T-cell (primary cell): ENCODE measurements at regions of chr14 and their contacts with region 1.

Region 1: DNA sequence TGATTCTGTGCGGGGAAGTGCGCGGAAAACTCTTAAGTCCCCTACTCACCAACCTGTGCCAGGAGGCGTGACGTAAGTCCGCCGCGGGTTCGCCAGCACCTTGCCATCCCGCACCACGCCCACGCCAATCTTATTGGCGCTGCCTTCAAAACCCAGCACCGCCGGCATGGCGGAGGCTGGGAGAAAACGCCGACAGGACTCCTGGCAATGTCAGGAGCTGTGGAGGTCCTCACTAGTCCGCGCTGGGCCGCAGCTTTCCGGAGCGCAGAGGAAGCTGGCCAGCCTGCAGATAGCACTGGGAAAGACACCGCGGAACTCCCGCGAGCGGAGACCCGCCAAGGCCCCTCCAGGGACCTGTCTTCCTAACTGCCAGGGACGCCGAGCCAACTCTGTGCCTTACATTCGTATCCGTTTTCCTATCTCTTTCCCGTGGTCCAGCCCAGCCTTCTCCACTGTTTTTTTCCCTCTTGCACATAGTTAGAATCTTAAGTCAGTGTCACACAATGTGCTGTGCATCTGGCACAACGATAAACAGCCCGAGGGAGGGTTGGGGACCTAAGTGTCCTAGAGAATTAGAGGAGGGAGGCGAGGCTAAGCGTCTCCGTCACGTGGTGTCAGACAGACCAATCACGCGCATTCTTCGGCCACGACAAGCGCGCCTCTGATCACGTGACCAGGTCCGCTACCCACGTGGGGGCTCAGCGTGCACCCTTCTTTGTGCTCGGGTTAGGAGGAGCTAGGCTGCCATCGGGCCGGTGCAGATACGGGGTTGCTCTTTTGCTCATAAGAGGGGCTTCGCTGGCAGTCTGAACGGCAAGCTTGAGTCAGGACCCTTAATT is at the starts of genes APEX1 and OSGEP:
- DNase-seq: peak; percentile 92 to 100 (median 98)
- ATAC-seq: peak; percentile 81 to 89 (median 86)
- H3K4me3 ChIP-seq: peak within 1 kb of the TSS; percentile 87 to 88
- H3K4me3 Mint-ChIP-seq: peak within 1 kb of the TSS in 1 of 3 donors; percentile 47
- H3K27ac ChIP-seq: peak within 1 kb of the TSS; percentile 88
- H3K27ac Mint-ChIP-seq: no peak within 1 kb of the TSS
- H3K4me1 ChIP-seq: peaks cover 21 to 23% of the 10 kb centered on the region in 2 experiments
- H3K4me1 Mint-ChIP-seq: peaks cover 18 to 30% (median 23%) of the 10 kb centered on the region in 3 donors
- H3K27me3 ChIP-seq: no peaks in the 10 kb centered on the region
- H3K27me3 Mint-ChIP-seq: no peaks in the 10 kb centered on the region
- total RNA-seq, gene APEX1: 92.9 to 142 (median 120) TPM
- total RNA-seq, gene OSGEP: 56.4 to 80.2 (median 61.5) TPM

Region 2: DNA sequence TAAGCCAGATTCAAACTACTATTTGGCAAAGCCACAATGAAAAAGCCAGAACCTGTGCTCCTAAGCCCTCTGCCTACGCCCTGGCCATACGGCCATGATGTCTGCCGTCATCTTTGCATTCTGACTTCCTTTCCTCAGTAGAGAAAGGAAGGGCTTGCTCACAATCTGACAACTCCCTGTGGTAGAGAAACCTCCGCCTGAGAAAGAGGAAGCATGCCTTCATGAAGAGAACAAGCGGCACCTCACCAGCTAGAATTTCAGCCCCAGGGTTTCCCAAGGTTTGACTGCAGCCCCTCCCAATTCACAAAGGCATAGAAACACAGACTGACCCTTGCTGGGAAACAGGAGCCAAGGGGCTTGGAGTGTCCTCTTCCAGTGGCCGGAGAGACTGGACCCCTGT is 67.2 kb before region 1 on chr14:
- CTCF ChIA-PET with region 1: no interaction called
- POLR2A ChIA-PET with region 1: no interaction called
- DNase-seq: peak in 1 of 35 experiments; percentile 5
- ATAC-seq: no peak
- H3K4me3 ChIP-seq: no peak overlapping the region
- H3K4me3 Mint-ChIP-seq: no peak overlapping the region
- H3K27ac ChIP-seq: no peak overlapping the region
- H3K27ac Mint-ChIP-seq: no peak overlapping the region
- H3K4me1 ChIP-seq: no peaks in the 10 kb centered on the region
- H3K4me1 Mint-ChIP-seq: no peaks in the 10 kb centered on the region
- H3K27me3 ChIP-seq: no peaks in the 10 kb centered on the region
- H3K27me3 Mint-ChIP-seq: no peaks in the 10 kb centered on the region

Region 3: GRCh38 chr14:20469242-20469889 is 14.6 kb after region 1 on chr14 and contains the start of gene PNP:
- CTCF ChIA-PET with region 1: no interaction called
- POLR2A ChIA-PET with region 1: interaction called, 3 to 13 read pairs
- DNase-seq: peak; percentile 66 to 93 (median 81)
- ATAC-seq: peak; percentile 88 to 93 (median 92)
- H3K4me3 ChIP-seq: peak within 1 kb of the TSS; percentile 74 to 86
- H3K4me3 Mint-ChIP-seq: peak within 1 kb of the TSS; percentile 92 to 99 (median 97)
- H3K27ac ChIP-seq: peak within 1 kb of the TSS; percentile 59
- H3K27ac Mint-ChIP-seq: peak within 1 kb of the TSS; percentile 93 to 98
- H3K4me1 ChIP-seq: peaks cover 19 to 30% of the 10 kb centered on the region in 2 experiments
- H3K4me1 Mint-ChIP-seq: peaks cover 42 to 51% (median 50%) of the 10 kb centered on the region in 3 donors
- H3K27me3 ChIP-seq: no peaks in the 10 kb centered on the region
- H3K27me3 Mint-ChIP-seq: no peaks in the 10 kb centered on the region
- total RNA-seq, gene PNP: 47.7 to 86.2 (median 77.9) TPM